ENCODE measurements at regions of chr2 and their contacts with region 1.

Region 1: GRCh38 chr2:135913727-135914365 is 37.6 kb upstream of the MCM6 start:
- DNase-seq: no peak
- ATAC-seq: no peak
- H3K4me3 Mint-ChIP-seq: no peak overlapping the region
- H3K27ac Mint-ChIP-seq: no peak overlapping the region
- H3K4me1 Mint-ChIP-seq: no peaks in the 10 kb centered on the region
- H3K27me3 Mint-ChIP-seq: no peaks in the 10 kb centered on the region
- CTCF ChIP-seq: peak; percentile 68

Region 2: GRCh38 chr2:136375017-136375901 is 461.4 kb after region 1 on chr2:
- CTCF ChIA-PET with region 1: interaction called, 12 read pairs
- POLR2A ChIA-PET with region 1: no interaction called
- DNase-seq: no peak
- ATAC-seq: no peak
- H3K4me3 Mint-ChIP-seq: no peak overlapping the region
- H3K27ac Mint-ChIP-seq: no peak overlapping the region; the same call in 1 of the 2 replicates
- H3K4me1 Mint-ChIP-seq: 0 out of 2 replicates have a peak, but pooled peaks cover 5% of the 10 kb centered on the region
- H3K27me3 Mint-ChIP-seq: no peaks in the 10 kb centered on the region
- CTCF ChIP-seq: no peak

Region 3: GRCh38 chr2:136384531-136385303 is 470.9 kb after region 1 on chr2:
- CTCF ChIA-PET with region 1: interaction called, 31 read pairs
- POLR2A ChIA-PET with region 1: no interaction called
- DNase-seq: peak; percentile 39
- ATAC-seq: peak; percentile 98
- H3K4me3 Mint-ChIP-seq: no peak overlapping the region
- H3K27ac Mint-ChIP-seq: no peak overlapping the region
- H3K4me1 Mint-ChIP-seq: peaks cover 15% of the 10 kb centered on the region; the same call in 1 of the 2 replicates
- H3K27me3 Mint-ChIP-seq: no peaks in the 10 kb centered on the region
- CTCF ChIP-seq: peak; percentile 53

Measured in WTC11 (cell line).